Aorta (tissue), 5 donors: ENCODE measurements at regions of chr1 and their contacts with region 1.

Region 1: DNA sequence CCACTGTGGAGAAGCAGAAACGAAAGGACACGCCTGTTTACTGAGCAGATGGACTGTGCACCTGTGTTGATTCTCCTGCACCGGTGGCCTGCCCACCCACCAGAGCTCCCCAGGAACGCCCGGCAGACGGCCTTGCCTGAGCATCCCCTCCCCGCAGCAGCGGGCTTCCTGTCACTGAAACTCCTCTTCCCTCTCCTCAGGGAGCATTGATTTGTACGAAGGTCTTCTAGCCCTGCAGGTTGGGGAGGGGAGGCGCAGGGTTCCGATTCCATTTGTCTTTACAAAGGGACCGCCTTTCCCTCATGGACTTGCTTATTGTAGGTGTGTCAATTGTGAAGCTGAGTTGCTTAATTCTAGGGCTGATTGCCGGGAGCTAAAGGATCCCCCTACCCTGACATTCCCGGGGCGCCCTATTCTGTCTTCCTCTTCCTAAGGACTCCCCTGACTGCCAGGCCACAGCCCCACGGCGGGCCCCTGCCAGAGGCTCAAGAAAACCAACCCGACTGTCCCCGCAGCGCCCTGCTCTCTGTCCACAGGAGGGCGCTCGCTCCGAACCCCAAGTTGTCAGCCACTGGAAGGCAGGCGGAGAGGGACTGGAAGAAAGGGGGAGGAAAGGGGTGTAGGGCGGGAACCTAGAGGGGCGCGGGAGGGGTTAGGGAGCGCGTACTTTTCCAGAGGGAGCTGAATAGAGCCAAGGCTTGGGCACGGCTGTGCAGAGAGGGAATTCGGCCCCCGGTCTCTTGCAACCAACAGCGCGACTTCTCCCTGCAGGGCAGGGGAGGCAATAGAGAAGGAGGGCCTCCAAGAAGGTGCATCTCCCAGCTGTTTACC is 2.8 kb downstream of the S100A6 start:
- DNase-seq: peak; percentile 91 to 95
- ATAC-seq: peak; percentile 83
- H3K4me3 ChIP-seq: peak overlapping the region; percentile 4 to 10
- H3K27ac ChIP-seq: peak overlapping the region; percentile 83 to 99
- H3K4me1 ChIP-seq: no peaks in the 10 kb centered on the region
- H3K27me3 ChIP-seq: no peaks in the 10 kb centered on the region

Region 2: GRCh38 chr1:153548722-153549695 is 16.0 kb after region 1 on chr1 and contains the start of gene S100A3:
- intact Hi-C with region 1: loop called in 1 of 2 experiments (anchors 2 kb)
- DNase-seq: peak; percentile 90 to 93
- ATAC-seq: peak; percentile 81
- H3K4me3 ChIP-seq: no peak within 1 kb of the TSS
- H3K27ac ChIP-seq: peak within 1 kb of the TSS; percentile 10 to 54
- H3K4me1 ChIP-seq: peaks cover 0 to 7% of the 10 kb centered on the region in 2 donors
- H3K27me3 ChIP-seq: no peaks in the 10 kb centered on the region
- total RNA-seq, gene S100A3: 2.3 to 3.8 TPM

Region 3: DNA sequence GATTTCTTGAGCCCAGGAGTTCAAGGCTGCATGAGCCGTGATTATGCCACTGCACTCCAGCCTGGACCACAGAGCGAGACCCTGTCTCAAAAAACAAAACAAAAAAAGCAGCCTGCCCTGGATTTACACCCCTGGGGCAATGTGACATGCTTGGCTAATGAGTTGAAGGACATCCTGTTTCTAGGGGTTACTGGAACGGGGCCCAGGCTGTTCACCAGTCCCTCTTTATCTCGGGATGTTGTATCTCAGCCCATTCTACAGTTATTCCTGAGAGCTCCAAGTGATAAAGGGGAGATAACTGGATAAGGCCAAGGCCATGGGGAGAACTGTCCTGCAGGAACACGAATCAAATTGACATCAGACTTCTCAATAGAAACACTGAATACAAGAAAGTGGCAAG is 54.3 kb after region 1 on chr1:
- intact Hi-C with region 1: no loop called
- DNase-seq: no peak
- ATAC-seq: no peak
- H3K4me3 ChIP-seq: no peak overlapping the region
- H3K27ac ChIP-seq: no peak overlapping the region
- H3K4me1 ChIP-seq: no peaks in the 10 kb centered on the region
- H3K27me3 ChIP-seq: no peaks in the 10 kb centered on the region